ENCODE measurements at regions of chr6 and their contacts with region 1.

Region 1: GRCh38 chr6:14059791-14060444 is 57.7 kb upstream of the CD83 start:
- DNase-seq: no peak
- CTCF ChIP-seq: no peak

Region 2: DNA sequence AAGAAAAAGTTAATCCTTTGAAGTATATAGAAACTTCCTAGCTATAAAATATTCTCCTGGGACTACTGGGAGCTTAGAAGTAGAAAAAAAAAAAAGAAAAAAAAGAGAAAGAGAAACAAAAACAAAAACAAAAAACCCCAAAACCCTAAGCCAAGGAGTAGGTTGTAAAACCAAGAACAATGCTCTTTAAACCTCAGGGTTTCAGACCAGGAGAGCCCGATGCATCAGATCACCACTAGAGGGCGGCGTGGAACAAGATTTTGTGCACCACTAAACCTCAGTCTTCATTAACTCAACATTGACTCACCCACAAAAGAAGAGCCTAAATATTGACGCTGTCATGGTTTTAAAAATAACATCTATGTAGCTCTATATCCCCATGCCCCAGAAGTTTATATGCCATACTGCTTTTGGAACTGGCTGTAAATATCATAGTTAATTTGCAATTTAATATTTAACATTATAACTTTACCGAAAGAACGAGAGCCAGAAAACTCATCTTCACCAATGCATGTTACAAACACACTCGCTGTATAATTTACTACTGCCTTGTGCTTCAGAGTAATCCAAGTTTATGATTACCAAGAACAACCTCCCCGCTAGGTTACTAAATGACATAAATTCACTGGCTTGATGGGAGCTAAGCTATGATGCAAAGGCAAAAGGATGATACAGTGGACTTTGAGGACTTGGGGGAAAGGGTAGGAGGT is 264.7 kb before region 1 on chr6:
- in situ Hi-C with region 1: loop called (anchors 10 kb)
- DNase-seq: peak; percentile 82
- CTCF ChIP-seq: peak; percentile 86

Region 3: GRCh38 chr6:13916230-13916944 is 143.5 kb before region 1 on chr6:
- in situ Hi-C with region 1: loop called (anchors 10 kb)
- DNase-seq: no peak
- CTCF ChIP-seq: no peak

Region 4: GRCh38 chr6:14286144-14286543 is 226.2 kb after region 1 on chr6:
- in situ Hi-C with region 1: no loop called
- DNase-seq: no peak
- CTCF ChIP-seq: no peak

Region 5: DNA sequence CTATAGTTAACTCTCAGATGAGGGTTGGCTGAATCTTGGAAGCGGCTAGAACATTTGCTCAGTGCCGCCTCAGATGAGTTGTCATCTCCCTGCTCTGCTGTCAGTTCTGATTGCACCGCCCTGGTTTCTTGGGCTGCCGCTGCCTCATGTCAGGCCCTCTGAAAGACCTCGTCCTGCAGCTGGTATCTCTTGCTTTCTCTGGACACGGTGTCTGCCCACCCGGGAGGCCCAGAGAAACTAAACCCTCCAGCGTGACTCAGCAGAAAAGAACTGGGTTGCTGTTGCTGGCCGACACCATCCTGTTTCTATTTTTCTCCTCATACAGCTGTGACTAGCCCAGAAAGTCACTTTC is 413.0 kb after region 1 on chr6:
- in situ Hi-C with region 1: no loop called
- DNase-seq: no peak
- CTCF ChIP-seq: no peak